Activated CD4-positive, alpha-beta T cell treated with anti-CD3 and anti-CD28 coated beads for 36 hours (primary cell): ENCODE measurements at regions of chr13 and their contacts with region 1.

Region 1: GRCh38 chr13:45310341-45311125 is 30.4 kb downstream of the TPT1 start:
- DNase-seq: no peak
- ATAC-seq: no peak
- H3K4me3 Mint-ChIP-seq: peak overlapping the region; percentile 68
- H3K27ac Mint-ChIP-seq: peak overlapping the region; percentile 65
- H3K4me1 Mint-ChIP-seq: peaks cover 20% of the 10 kb centered on the region
- H3K27me3 Mint-ChIP-seq: peaks cover 13% of the 10 kb centered on the region

Region 2: GRCh38 chr13:44969551-44970484 is 340.7 kb before region 1 on chr13:
- CTCF ChIA-PET with region 1: interaction called, 4 read pairs
- POLR2A ChIA-PET with region 1: no interaction called
- intact Hi-C with region 1: loop called in 1 of 2 experiments (anchors 1 kb)
- DNase-seq: no peak
- ATAC-seq: no peak
- H3K4me3 Mint-ChIP-seq: no peak overlapping the region
- H3K27ac Mint-ChIP-seq: no peak overlapping the region
- H3K4me1 Mint-ChIP-seq: peaks cover 2% of the 10 kb centered on the region
- H3K27me3 Mint-ChIP-seq: no peaks in the 10 kb centered on the region

Region 3: DNA sequence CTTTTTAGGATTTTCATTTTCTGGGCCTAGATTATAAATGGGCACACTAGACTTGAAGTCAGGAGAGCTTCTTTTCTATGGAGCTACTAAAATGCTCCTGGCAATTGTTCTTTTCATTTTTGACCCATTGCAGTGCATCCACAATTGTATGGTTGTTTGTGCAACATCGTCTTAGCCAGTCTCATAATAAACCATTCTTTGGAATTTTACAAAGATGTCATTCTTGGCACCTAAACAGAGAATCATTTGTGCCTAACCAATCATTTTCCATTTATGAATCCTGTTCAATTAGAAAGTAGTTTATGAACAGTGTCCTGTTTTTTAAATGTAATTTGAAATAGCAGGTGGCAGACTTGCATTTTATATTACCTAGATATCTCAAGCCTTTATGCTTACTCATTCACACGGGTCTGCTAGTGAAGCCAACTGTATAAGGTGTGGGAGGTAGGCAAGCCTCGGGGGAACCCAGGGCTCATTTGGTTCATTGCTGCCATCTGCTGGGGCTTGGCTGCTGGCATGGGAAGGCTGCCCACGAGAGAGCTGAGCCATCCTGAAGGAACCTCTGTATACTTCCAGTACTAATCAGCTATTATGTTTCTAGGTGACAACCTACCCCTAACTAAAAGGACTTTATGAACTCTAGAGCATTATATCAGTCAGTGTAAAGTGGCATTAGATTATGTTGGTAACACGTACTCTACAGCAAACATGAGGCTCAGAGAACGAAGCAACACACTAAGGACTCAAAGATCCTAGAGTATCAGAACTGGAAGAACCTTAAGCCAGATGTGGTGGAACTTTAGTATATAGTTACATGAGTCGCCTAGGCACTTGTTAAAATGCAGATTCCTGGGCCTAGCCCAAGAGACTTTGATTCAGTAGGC is 29.5 kb before region 1 on chr13:
- CTCF ChIA-PET with region 1: interaction called, 16 read pairs
- POLR2A ChIA-PET with region 1: no interaction called
- intact Hi-C with region 1: loop called in 1 of 2 experiments (anchors 2 kb)
- DNase-seq: peak; percentile 81
- ATAC-seq: peak; percentile 100
- H3K4me3 Mint-ChIP-seq: no peak overlapping the region
- H3K27ac Mint-ChIP-seq: no peak overlapping the region
- H3K4me1 Mint-ChIP-seq: peaks cover 7% of the 10 kb centered on the region
- H3K27me3 Mint-ChIP-seq: no peaks in the 10 kb centered on the region

Region 4: GRCh38 chr13:45297456-45298205 is 12.9 kb before region 1 on chr13:
- CTCF ChIA-PET with region 1: interaction called, 37 read pairs
- POLR2A ChIA-PET with region 1: interaction called, 5 read pairs
- intact Hi-C with region 1: no loop called
- DNase-seq: peak; percentile 57
- ATAC-seq: peak; percentile 91
- H3K4me3 Mint-ChIP-seq: no peak overlapping the region
- H3K27ac Mint-ChIP-seq: peak overlapping the region; percentile 72
- H3K4me1 Mint-ChIP-seq: peaks cover 42% of the 10 kb centered on the region
- H3K27me3 Mint-ChIP-seq: no peaks in the 10 kb centered on the region

Region 5: GRCh38 chr13:45332036-45332830 is 21.7 kb after region 1 on chr13:
- CTCF ChIA-PET with region 1: no interaction called
- POLR2A ChIA-PET with region 1: no interaction called
- intact Hi-C with region 1: loop called in 1 of 2 experiments (anchors 2 kb)
- DNase-seq: no peak
- ATAC-seq: no peak
- H3K4me3 Mint-ChIP-seq: no peak overlapping the region
- H3K27ac Mint-ChIP-seq: peak overlapping the region; percentile 55
- H3K4me1 Mint-ChIP-seq: peaks cover 90% of the 10 kb centered on the region
- H3K27me3 Mint-ChIP-seq: no peaks in the 10 kb centered on the region